CD4-positive, alpha-beta memory T cell (primary cell): ENCODE measurements at regions of chr14 and their contacts with region 1.

Region 1: GRCh38 chr14:53894456-53894855 is 62.2 kb downstream of the BMP4 start:
- DNase-seq: no peak
- H3K4me3 ChIP-seq: no peak overlapping the region
- H3K4me3 Mint-ChIP-seq: no peak overlapping the region
- H3K27ac ChIP-seq: no peak overlapping the region
- H3K27ac Mint-ChIP-seq: no peak overlapping the region
- H3K4me1 ChIP-seq: no peaks in the 10 kb centered on the region
- H3K4me1 Mint-ChIP-seq: peaks cover 0 to 4% (median under 1%) of the 10 kb centered on the region in 4 donors
- H3K27me3 ChIP-seq: no peaks in the 10 kb centered on the region
- H3K27me3 Mint-ChIP-seq: peaks cover 0 to 7% of the 10 kb centered on the region in 2 donors

Region 2: DNA sequence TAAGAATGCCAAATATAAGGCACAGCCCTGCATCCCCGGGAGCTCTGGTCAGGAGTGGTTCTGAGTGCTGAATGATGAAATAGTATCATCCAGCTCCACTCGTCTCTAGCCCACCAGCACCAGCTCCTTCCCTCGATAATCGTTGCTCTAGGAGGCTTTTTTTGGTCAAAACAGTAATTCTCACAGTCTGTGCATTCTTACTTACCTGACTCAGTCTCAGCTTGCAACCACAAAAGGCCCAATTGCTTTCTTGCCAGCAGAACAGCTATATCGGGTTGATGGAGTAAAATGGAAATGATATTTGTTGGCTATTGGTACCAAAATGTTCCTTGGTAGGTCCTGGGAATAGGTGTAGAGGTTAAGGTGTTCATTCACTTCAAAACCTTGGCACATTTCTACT is 32.7 kb before region 1 on chr14:
- CTCF ChIA-PET with region 1: no interaction called
- POLR2A ChIA-PET with region 1: no interaction called
- intact Hi-C with region 1: no loop called
- DNase-seq: no peak
- H3K4me3 ChIP-seq: no peak overlapping the region
- H3K4me3 Mint-ChIP-seq: no peak overlapping the region
- H3K27ac ChIP-seq: no peak overlapping the region
- H3K27ac Mint-ChIP-seq: no peak overlapping the region
- H3K4me1 ChIP-seq: no peaks in the 10 kb centered on the region
- H3K4me1 Mint-ChIP-seq: no peaks in the 10 kb centered on the region
- H3K27me3 ChIP-seq: no peaks in the 10 kb centered on the region
- H3K27me3 Mint-ChIP-seq: peaks cover 0 to 1% of the 10 kb centered on the region in 2 donors

Region 3: GRCh38 chr14:53872681-53873089 is 21.8 kb before region 1 on chr14:
- CTCF ChIA-PET with region 1: no interaction called
- POLR2A ChIA-PET with region 1: no interaction called
- intact Hi-C with region 1: loop called (anchors 1 kb)
- DNase-seq: no peak
- H3K4me3 ChIP-seq: no peak overlapping the region
- H3K4me3 Mint-ChIP-seq: no peak overlapping the region
- H3K27ac ChIP-seq: no peak overlapping the region
- H3K27ac Mint-ChIP-seq: no peak overlapping the region
- H3K4me1 ChIP-seq: no peaks in the 10 kb centered on the region
- H3K4me1 Mint-ChIP-seq: no peaks in the 10 kb centered on the region
- H3K27me3 ChIP-seq: no peaks in the 10 kb centered on the region
- H3K27me3 Mint-ChIP-seq: peaks cover 0 to 2% of the 10 kb centered on the region in 2 donors

Region 4: GRCh38 chr14:53946404-53947096 is 52.1 kb after region 1 on chr14:
- CTCF ChIA-PET with region 1: no interaction called
- POLR2A ChIA-PET with region 1: no interaction called
- intact Hi-C with region 1: no loop called
- DNase-seq: no peak
- H3K4me3 ChIP-seq: no peak overlapping the region
- H3K4me3 Mint-ChIP-seq: peak overlapping the region in 1 of 8 donors; percentile 52
- H3K27ac ChIP-seq: no peak overlapping the region
- H3K27ac Mint-ChIP-seq: no peak overlapping the region
- H3K4me1 ChIP-seq: no peaks in the 10 kb centered on the region
- H3K4me1 Mint-ChIP-seq: no peaks in the 10 kb centered on the region
- H3K27me3 ChIP-seq: peaks cover 4% of the 10 kb centered on the region
- H3K27me3 Mint-ChIP-seq: peaks cover 32 to 42% of the 10 kb centered on the region in 2 donors

Region 5: DNA sequence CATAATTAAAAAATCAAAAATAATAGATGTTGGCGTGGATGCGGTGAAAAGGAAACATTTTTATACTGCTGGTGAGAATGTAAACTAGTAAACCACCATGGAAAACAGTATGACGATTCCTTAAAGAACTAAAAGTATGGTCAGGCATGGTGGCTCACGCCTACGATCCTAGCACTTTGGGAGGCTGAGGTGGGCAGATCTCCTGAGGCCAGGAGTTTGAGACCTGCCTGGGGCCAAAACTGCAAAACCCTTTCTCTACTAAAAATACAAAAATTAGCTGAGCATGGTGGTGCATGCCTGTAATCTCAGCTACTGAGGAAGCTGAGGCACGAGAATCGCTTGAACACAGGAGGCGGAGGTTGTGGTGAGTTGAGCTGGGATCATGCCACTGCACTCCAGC is 257.9 kb after region 1 on chr14:
- CTCF ChIA-PET with region 1: no interaction called
- POLR2A ChIA-PET with region 1: no interaction called
- intact Hi-C with region 1: no loop called
- DNase-seq: no peak
- H3K4me3 ChIP-seq: no peak overlapping the region
- H3K4me3 Mint-ChIP-seq: no peak overlapping the region
- H3K27ac ChIP-seq: no peak overlapping the region
- H3K27ac Mint-ChIP-seq: no peak overlapping the region
- H3K4me1 ChIP-seq: no peaks in the 10 kb centered on the region
- H3K4me1 Mint-ChIP-seq: no peaks in the 10 kb centered on the region
- H3K27me3 ChIP-seq: no peaks in the 10 kb centered on the region
- H3K27me3 Mint-ChIP-seq: peaks cover 0 to 3% of the 10 kb centered on the region in 2 donors